Activated B cell treated with CpG ODN at 0.5 μM for 24 hours (primary cell): ENCODE measurements at regions of chr13 and their contacts with region 1.

Region 1: GRCh38 chr13:77016888-77017623 is 9.9 kb downstream of the FBXL3 start:
- DNase-seq: no peak
- ATAC-seq: no peak
- H3K4me3 Mint-ChIP-seq: no peak overlapping the region
- H3K27ac Mint-ChIP-seq: no peak overlapping the region
- H3K4me1 Mint-ChIP-seq: peaks cover 39% of the 10 kb centered on the region
- H3K27me3 Mint-ChIP-seq: no peaks in the 10 kb centered on the region
- CTCF ChIP-seq: no peak

Region 2: GRCh38 chr13:77002590-77003190 is 14.4 kb before region 1 on chr13:
- CTCF ChIA-PET with region 1: interaction called, 5 read pairs
- POLR2A ChIA-PET with region 1: interaction called, 4 read pairs
- intact Hi-C with region 1: loop called (anchors 1 kb)
- DNase-seq: no peak
- ATAC-seq: no peak
- H3K4me3 Mint-ChIP-seq: no peak overlapping the region
- H3K27ac Mint-ChIP-seq: no peak overlapping the region
- H3K4me1 Mint-ChIP-seq: peaks cover 20% of the 10 kb centered on the region
- H3K27me3 Mint-ChIP-seq: no peaks in the 10 kb centered on the region
- CTCF ChIP-seq: no peak